MCF 10A (cell line): ENCODE measurements at regions of chr1 and their contacts with region 1.

Region 1: DNA sequence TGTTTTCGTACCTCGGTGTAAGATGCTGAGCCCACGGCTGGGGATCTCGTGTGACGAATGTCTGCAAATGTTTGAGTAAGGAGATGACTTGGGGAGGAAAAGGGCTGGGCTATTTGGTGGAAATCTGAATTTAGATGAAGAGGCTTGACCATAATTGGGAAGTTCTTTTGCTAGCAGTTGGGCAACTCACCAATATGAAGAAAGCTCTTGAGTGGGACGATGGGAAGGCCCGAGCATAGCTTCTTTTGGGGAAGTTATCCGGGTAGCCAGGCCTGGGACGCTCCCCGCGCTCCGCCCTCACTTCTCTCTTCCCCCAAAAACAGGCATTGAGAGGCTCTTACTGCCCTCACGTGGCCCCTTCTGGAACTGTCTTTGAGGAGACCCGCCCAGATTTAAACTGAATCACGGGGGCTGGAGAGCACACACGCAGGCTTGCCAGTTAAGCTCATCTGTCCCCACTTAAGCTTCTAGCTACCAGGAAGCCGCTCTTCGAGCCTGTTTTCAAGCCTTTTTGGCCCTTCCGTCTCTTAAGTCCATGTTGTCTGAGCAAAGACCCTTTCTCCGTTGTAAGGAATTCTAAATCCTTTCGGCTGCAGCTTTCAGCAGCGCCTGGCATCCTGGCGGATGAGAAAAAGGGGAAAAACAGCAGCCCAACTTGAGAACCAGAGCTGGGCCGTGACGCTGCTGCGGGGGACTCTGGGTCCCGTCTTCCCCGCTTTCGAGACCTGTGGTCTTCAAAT is 93.1 kb downstream of the NID1 start:
- DNase-seq: peak; percentile 98
- H3K4me3 Mint-ChIP-seq: no peak overlapping the region
- H3K27ac Mint-ChIP-seq: peak overlapping the region; percentile 9
- H3K4me1 Mint-ChIP-seq: peaks cover 17% of the 10 kb centered on the region
- H3K27me3 Mint-ChIP-seq: no peaks in the 10 kb centered on the region
- CTCF ChIP-seq: peak; percentile 99

Region 2: GRCh38 chr1:235105051-235106043 is 866.4 kb before region 1 on chr1:
- CTCF ChIA-PET with region 1: no interaction called
- POLR2A ChIA-PET with region 1: no interaction called
- intact Hi-C with region 1: loop called (anchors 2 kb)
- DNase-seq: peak; percentile 51
- H3K4me3 Mint-ChIP-seq: peak overlapping the region; percentile 59
- H3K27ac Mint-ChIP-seq: peak overlapping the region; percentile 33
- H3K4me1 Mint-ChIP-seq: peaks cover 29% of the 10 kb centered on the region
- H3K27me3 Mint-ChIP-seq: no peaks in the 10 kb centered on the region
- CTCF ChIP-seq: no peak

Region 3: GRCh38 chr1:235156265-235156664 is 815.5 kb before region 1 on chr1:
- CTCF ChIA-PET with region 1: no interaction called
- POLR2A ChIA-PET with region 1: no interaction called
- intact Hi-C with region 1: no loop called
- DNase-seq: no peak
- H3K4me3 Mint-ChIP-seq: no peak overlapping the region
- H3K27ac Mint-ChIP-seq: no peak overlapping the region
- H3K4me1 Mint-ChIP-seq: peaks cover 12% of the 10 kb centered on the region
- H3K27me3 Mint-ChIP-seq: no peaks in the 10 kb centered on the region
- CTCF ChIP-seq: no peak

Region 4: DNA sequence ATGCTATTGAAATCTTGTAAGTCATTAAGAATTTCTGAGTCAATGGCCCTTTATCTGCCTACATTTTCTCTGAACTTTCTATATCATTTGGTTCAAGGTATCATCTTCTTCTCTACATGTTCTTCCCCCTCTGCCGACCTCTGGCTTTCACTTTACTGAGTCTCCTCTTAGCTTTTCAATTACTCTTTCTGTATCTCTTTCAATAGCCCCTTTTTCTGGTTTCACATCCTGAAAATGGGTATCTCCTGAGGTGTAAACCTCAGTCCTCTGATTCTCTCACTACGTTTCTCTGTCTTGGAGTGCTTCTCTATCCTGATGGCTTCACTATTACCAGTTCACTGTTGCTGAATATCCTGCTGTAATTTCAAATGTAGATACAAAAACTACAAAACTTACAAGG is 203.9 kb before region 1 on chr1:
- CTCF ChIA-PET with region 1: interaction called, 11 read pairs
- POLR2A ChIA-PET with region 1: no interaction called
- intact Hi-C with region 1: no loop called
- DNase-seq: no peak
- H3K4me3 Mint-ChIP-seq: no peak overlapping the region
- H3K27ac Mint-ChIP-seq: no peak overlapping the region
- H3K4me1 Mint-ChIP-seq: no peaks in the 10 kb centered on the region
- H3K27me3 Mint-ChIP-seq: no peaks in the 10 kb centered on the region
- CTCF ChIP-seq: no peak

Region 5: GRCh38 chr1:235838021-235838420 is 133.7 kb before region 1 on chr1:
- CTCF ChIA-PET with region 1: interaction called, 92 read pairs
- POLR2A ChIA-PET with region 1: interaction called, 4 read pairs
- intact Hi-C with region 1: no loop called
- DNase-seq: no peak
- H3K4me3 Mint-ChIP-seq: no peak overlapping the region
- H3K27ac Mint-ChIP-seq: no peak overlapping the region
- H3K4me1 Mint-ChIP-seq: no peaks in the 10 kb centered on the region
- H3K27me3 Mint-ChIP-seq: no peaks in the 10 kb centered on the region
- CTCF ChIP-seq: no peak

Region 6: DNA sequence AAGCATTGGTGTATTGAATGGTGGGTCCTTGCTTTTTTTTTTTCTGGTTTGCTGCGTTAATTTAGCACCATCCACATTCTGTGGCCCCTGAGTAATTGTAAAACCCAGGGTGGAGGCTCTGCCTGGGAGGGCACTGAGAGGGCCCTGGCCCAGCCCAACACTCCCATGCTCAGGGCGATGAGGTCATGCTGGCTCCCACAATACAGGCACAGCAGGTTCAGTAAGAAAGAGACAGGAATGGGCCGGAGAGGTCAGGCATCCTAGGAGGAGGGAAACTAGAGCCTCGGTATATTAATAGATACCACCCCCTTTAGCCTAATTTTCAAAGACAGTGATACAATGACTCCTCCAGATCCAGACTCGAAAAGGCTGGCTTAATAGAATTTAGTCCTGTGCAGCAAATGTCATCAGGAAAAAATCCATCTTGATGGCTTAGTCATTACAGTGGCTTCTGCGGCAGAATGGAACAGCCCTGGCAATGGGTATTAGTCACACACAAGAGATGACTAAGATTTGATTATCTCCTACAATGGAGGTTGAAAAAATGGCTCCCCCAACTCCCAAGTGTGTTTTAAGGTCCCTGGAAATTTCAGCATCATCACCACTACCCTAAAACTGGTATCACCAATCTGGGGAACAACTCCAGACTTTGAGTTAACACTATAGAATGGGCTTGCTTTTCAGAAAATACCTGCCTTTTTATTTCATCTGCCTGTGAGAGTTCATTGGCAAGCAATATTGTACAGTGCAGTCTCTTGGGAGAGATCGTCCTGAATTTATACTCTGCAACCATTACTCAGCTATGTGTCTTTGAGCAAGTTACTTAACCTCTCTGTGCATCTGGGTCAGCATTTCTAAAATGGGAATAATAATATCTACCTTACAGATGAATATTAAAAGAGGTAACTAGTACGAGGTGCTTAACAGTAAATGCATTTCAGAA is 61.1 kb before region 1 on chr1:
- CTCF ChIA-PET with region 1: interaction called, 27 read pairs
- POLR2A ChIA-PET with region 1: interaction called, 14 read pairs
- intact Hi-C with region 1: loop called (anchors 1 kb)
- DNase-seq: peak; percentile 97
- H3K4me3 Mint-ChIP-seq: peak overlapping the region; percentile 22
- H3K27ac Mint-ChIP-seq: peak overlapping the region; percentile 99
- H3K4me1 Mint-ChIP-seq: peaks cover 55% of the 10 kb centered on the region
- H3K27me3 Mint-ChIP-seq: no peaks in the 10 kb centered on the region
- CTCF ChIP-seq: no peak

Region 7: DNA sequence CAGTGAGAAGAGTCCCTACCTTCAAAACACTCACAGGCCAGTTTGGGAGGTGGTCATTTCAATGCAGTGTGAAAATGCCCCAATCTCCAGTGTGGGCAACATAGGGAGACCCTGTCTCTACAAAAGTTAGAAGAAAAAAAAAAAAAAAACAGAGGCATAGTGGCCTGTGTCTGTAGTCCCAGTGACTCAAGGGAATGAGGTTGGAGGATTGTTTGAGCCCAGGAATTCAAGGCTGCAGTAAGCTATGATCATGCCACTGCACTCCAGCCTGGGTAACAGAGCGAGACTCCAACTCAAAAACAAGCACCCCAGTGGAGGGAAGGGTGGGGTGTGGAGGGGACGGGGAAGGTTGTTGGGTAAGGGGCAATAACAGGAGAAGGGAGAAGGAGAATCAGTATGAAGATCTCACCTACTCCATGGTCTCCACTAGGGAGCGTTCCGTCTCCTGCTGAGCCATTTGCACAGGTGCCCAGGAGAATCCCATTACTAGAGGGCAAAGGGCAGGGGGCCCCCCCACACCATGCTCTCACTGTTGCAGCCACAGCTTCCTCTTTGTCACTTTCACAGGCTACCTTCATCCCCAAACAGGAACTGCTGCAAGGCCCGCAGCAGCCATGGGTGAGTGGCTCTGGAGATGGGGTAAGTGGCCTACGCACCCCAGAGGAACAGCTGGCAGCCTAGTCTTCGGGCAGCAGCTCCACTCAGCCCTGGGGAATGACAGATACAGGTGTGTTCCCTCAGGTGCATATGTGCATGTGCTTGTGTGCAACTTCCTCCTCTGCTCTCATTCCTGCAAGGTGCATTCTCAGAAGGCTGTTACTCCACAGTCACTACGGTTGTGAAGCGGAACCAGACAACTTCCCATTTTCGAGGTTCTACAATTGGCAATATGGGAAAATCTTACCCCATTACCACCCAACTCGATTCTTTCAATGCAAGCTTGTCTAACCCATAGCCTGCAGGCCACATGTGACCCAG is 17.1 kb before region 1 on chr1:
- CTCF ChIA-PET with region 1: interaction called, 179 read pairs
- POLR2A ChIA-PET with region 1: interaction called, 20 read pairs
- intact Hi-C with region 1: no loop called
- DNase-seq: no peak
- H3K4me3 Mint-ChIP-seq: no peak overlapping the region
- H3K27ac Mint-ChIP-seq: peak overlapping the region; percentile 28
- H3K4me1 Mint-ChIP-seq: peaks cover 9% of the 10 kb centered on the region
- H3K27me3 Mint-ChIP-seq: no peaks in the 10 kb centered on the region
- CTCF ChIP-seq: no peak

Region 8: GRCh38 chr1:236009857-236010256 is 38.1 kb after region 1 on chr1:
- CTCF ChIA-PET with region 1: interaction called, 13 read pairs
- POLR2A ChIA-PET with region 1: no interaction called
- intact Hi-C with region 1: no loop called
- DNase-seq: peak; percentile 69
- H3K4me3 Mint-ChIP-seq: no peak overlapping the region
- H3K27ac Mint-ChIP-seq: peak overlapping the region; percentile 78
- H3K4me1 Mint-ChIP-seq: peaks cover 15% of the 10 kb centered on the region
- H3K27me3 Mint-ChIP-seq: no peaks in the 10 kb centered on the region
- CTCF ChIP-seq: no peak

Region 9: GRCh38 chr1:236181059-236181458 is 209.3 kb after region 1 on chr1:
- CTCF ChIA-PET with region 1: no interaction called
- POLR2A ChIA-PET with region 1: no interaction called
- intact Hi-C with region 1: no loop called
- DNase-seq: peak; percentile 29
- H3K4me3 Mint-ChIP-seq: no peak overlapping the region
- H3K27ac Mint-ChIP-seq: no peak overlapping the region
- H3K4me1 Mint-ChIP-seq: peaks cover 5% of the 10 kb centered on the region
- H3K27me3 Mint-ChIP-seq: no peaks in the 10 kb centered on the region
- CTCF ChIP-seq: no peak

Region 10: DNA sequence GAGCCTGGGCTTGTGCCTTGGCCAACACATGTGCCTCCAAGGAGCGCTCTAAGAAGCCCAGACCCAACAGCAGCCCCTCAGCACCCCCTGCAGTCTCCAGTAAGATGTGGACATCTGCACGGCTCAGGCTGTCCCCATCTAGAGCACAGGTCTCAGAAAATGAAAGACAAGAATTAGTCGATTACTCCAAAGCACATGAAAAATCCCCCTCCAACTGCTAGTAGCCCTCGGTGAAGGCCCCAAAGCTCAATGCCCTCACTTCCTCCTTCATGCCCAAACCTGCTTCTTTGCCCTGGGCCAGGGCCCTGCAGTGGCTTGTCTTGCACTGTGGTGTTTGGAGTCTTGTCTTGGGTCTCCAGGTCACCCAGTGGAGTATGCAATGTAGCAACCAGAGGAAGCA is 331.9 kb after region 1 on chr1:
- CTCF ChIA-PET with region 1: no interaction called
- POLR2A ChIA-PET with region 1: no interaction called
- intact Hi-C with region 1: no loop called
- DNase-seq: peak; percentile 29
- H3K4me3 Mint-ChIP-seq: no peak overlapping the region
- H3K27ac Mint-ChIP-seq: no peak overlapping the region
- H3K4me1 Mint-ChIP-seq: no peaks in the 10 kb centered on the region
- H3K27me3 Mint-ChIP-seq: no peaks in the 10 kb centered on the region
- CTCF ChIP-seq: no peak